ENCODE measurements at regions of chr17 and their contacts with region 1.

Region 1: GRCh38 chr17:66567234-66568170 is 265.1 kb downstream of the PRKCA start:
- DNase-seq: peak; percentile 74
- H3K4me3 ChIP-seq: no peak overlapping the region
- CTCF ChIP-seq: peak; percentile 84

Region 2: DNA sequence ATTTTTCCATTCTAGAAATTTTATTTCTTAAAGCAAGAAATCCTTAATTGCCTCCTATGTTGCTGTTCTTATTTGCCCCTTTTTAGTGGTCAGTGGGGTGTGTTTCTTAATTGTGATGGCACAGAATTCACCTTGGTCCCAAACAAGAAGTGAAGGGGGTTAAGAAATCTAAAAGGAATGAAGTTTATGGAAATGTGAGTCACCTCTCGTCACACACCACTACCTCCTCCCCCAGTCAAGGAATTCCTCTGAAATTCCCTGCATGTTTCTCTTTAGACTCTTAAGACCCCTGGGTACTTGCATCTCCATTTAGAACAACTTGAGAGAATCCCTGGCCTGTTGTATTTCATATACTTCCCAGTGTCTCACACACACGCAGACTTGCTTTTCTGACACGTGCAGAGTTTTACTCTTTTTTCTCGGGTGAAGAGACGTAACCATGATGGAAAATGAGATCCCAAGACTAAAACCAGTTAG is 17.7 kb before region 1 on chr17:
- CTCF ChIA-PET with region 1: interaction called, 34 read pairs
- POLR2A ChIA-PET with region 1: interaction called, 3 read pairs
- DNase-seq: peak; percentile 94
- H3K4me3 ChIP-seq: no peak overlapping the region
- CTCF ChIP-seq: no peak

Region 3: DNA sequence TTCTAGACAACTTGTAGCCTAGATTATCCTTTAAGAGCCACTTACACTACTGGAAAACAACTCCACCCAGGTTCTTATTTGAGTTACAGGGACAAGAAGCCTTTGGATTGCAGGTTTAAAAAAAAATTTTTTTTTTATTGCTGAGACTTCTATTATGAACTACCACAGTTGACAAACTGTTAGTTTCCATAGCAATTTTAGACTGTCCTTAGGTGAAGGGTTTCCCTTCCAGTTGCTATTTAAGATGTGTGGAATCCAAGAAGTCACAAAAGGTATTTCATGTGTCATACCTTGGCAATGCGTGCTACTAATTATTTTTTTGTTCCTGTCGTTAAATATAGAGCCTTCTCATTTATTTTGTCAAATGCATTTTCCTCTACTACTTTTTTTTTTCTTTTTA is 11.9 kb before region 1 on chr17:
- CTCF ChIA-PET with region 1: interaction called, 34 read pairs
- POLR2A ChIA-PET with region 1: interaction called, 3 read pairs
- DNase-seq: no peak
- H3K4me3 ChIP-seq: no peak overlapping the region
- CTCF ChIP-seq: no peak

Region 4: DNA sequence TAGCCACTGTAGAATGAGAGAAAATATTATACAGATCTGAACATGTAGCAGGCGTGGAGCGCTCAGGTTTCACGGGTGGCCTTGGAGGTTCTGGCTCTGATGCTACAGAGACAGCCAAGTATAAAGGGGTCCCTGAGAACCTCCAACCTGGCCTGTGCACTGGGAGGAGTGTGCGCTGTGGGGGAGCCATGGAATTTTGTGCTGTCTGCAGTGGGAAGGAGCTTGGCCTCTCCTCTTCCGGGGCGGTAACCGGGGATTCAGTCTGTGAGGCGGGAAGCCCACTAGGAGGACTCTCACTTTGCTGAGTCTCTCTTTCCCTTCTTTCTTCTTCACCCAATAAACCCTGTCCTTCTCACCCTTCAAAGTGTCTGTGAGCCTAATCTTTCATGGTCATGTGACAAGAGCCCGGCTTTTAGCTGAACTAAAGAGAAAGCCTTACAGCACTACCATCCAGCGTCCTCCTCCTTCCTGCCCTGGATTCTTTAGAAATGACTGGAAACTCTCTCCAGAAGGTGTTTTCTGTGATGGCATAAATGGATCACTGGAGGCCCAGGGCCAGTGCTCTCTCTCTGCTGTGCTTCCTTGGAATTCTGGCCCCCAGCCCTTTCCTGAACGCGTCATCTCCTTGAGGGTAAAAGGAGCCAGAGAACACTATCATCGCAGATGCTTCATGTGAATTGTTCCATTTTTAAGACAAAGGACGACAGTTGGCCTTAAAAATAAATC is 35.3 kb after region 1 on chr17:
- CTCF ChIA-PET with region 1: no interaction called
- POLR2A ChIA-PET with region 1: no interaction called
- DNase-seq: no peak
- H3K4me3 ChIP-seq: no peak overlapping the region
- CTCF ChIP-seq: no peak

Measured in AG04449 (cell line).